Naive thymus-derived CD4-positive, alpha-beta T cell (primary cell): ENCODE measurements at regions of chr12 and their contacts with region 1.

Region 1: DNA sequence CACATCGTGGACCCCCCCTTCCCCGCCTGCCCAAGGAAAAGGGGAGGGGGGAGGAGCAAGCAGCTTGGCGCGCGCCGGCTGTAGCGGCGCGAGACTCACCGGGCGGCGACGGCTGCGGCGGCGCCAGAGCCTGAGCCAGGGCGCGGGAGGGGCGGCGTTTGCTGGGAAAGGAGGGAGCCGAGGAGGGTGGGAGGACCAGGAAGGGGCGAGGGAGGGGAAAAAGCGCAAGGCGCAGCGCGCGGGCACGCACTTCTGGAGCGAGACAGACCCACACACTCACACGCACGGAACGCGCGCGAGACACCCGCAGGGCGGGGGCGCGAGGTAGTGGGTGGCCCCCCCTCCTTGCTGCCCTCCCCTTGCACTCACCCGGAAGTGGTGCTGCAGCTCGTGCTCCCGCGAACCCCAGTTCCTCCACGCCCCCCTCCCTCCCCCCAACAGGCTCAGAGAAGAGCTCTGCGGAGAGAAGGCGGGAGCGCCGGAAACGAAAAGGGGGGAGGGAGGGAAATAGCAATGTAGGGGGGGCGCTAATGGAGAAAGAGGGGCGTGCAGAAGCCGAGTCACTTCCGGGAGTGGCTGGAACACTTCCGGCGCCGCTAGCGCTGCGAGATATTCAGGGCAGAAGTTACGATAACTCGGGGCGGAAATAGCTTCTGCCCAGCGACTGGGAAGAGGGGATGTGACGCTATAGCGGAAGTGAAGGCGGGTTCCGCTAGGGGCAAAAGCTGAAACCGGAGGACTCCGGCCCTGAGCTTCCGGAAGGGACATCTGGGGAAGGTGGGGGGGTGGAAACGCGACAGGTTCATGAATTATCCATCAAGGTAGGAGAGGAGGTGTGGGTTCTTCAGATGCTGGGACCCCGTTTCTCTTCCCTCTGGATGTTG is at the start of gene ZNF384:
- DNase-seq: peak; percentile 83 to 98 (median 96)
- ATAC-seq: peak; percentile 91
- H3K4me3 ChIP-seq: peak within 1 kb of the TSS; percentile 84
- H3K4me3 Mint-ChIP-seq: peak within 1 kb of the TSS; percentile 85 to 100 (median 96)
- H3K27ac ChIP-seq: peak within 1 kb of the TSS; percentile 91
- H3K27ac Mint-ChIP-seq: peak within 1 kb of the TSS; percentile 93 to 99 (median 98)
- H3K4me1 ChIP-seq: peaks cover 17 to 19% of the 10 kb centered on the region in 2 donors
- H3K4me1 Mint-ChIP-seq: peaks cover 37 to 69% (median 53%) of the 10 kb centered on the region in 7 donors
- H3K27me3 ChIP-seq: no peaks in the 10 kb centered on the region
- H3K27me3 Mint-ChIP-seq: no peaks in the 10 kb centered on the region
- total RNA-seq, gene ZNF384: 62.8 to 98.2 (median 85.4) TPM

Region 2: GRCh38 chr12:6470375-6471163 is 218.7 kb before region 1 on chr12 and contains the start of gene VAMP1:
- CTCF ChIA-PET with region 1: no interaction called
- POLR2A ChIA-PET with region 1: no interaction called
- intact Hi-C with region 1: loop called in 1 of 2 experiments (anchors 1 kb)
- DNase-seq: peak; percentile 90 to 97 (median 95)
- ATAC-seq: peak; percentile 94
- H3K4me3 ChIP-seq: peak within 1 kb of the TSS; percentile 96
- H3K4me3 Mint-ChIP-seq: peak within 1 kb of the TSS; percentile 85 to 96 (median 92)
- H3K27ac ChIP-seq: peak within 1 kb of the TSS; percentile 75
- H3K27ac Mint-ChIP-seq: peak within 1 kb of the TSS; percentile 79 to 99 (median 95)
- H3K4me1 ChIP-seq: peaks cover 38 to 39% of the 10 kb centered on the region in 2 donors
- H3K4me1 Mint-ChIP-seq: peaks cover 26 to 59% (median 52%) of the 10 kb centered on the region in 7 donors
- H3K27me3 ChIP-seq: no peaks in the 10 kb centered on the region
- H3K27me3 Mint-ChIP-seq: peaks cover 0 to 5% (median 0%) of the 10 kb centered on the region in 5 donors
- total RNA-seq, gene VAMP1: 38.7 to 123 (median 47.9) TPM

Region 3: GRCh38 chr12:6607751-6608591 is 81.3 kb before region 1 on chr12:
- CTCF ChIA-PET with region 1: interaction called, 5 read pairs
- POLR2A ChIA-PET with region 1: interaction called, 9 read pairs
- intact Hi-C with region 1: loop called (anchors 1 kb)
- DNase-seq: peak in 8 of 9 donors; percentile 56 to 81 (median 71)
- ATAC-seq: peak; percentile 49
- H3K4me3 ChIP-seq: no peak overlapping the region
- H3K4me3 Mint-ChIP-seq: no peak overlapping the region
- H3K27ac ChIP-seq: peak overlapping the region; percentile 96
- H3K27ac Mint-ChIP-seq: no peak overlapping the region
- H3K4me1 ChIP-seq: peaks cover 46 to 47% of the 10 kb centered on the region in 2 donors
- H3K4me1 Mint-ChIP-seq: peaks cover 48 to 55% (median 51%) of the 10 kb centered on the region in 7 donors
- H3K27me3 ChIP-seq: no peaks in the 10 kb centered on the region
- H3K27me3 Mint-ChIP-seq: no peaks in the 10 kb centered on the region

Region 4: GRCh38 chr12:6723607-6724396 is 34.6 kb after region 1 on chr12 and contains the start of gene COPS7A:
- CTCF ChIA-PET with region 1: interaction called, 11 read pairs
- POLR2A ChIA-PET with region 1: interaction called, 67 read pairs
- intact Hi-C with region 1: loop called (anchors 1 kb)
- DNase-seq: peak; percentile 77 to 94 (median 90)
- ATAC-seq: peak; percentile 93
- H3K4me3 ChIP-seq: peak within 1 kb of the TSS; percentile 63
- H3K4me3 Mint-ChIP-seq: peak within 1 kb of the TSS; percentile 80 to 97 (median 92)
- H3K27ac ChIP-seq: peak within 1 kb of the TSS; percentile 75
- H3K27ac Mint-ChIP-seq: peak within 1 kb of the TSS; percentile 90 to 98 (median 96)
- H3K4me1 ChIP-seq: peaks cover 10 to 11% of the 10 kb centered on the region in 2 donors
- H3K4me1 Mint-ChIP-seq: peaks cover 24 to 34% (median 27%) of the 10 kb centered on the region in 7 donors
- H3K27me3 ChIP-seq: no peaks in the 10 kb centered on the region
- H3K27me3 Mint-ChIP-seq: no peaks in the 10 kb centered on the region
- total RNA-seq, gene COPS7A: 21.9 to 38.7 (median 30.1) TPM

Region 5: DNA sequence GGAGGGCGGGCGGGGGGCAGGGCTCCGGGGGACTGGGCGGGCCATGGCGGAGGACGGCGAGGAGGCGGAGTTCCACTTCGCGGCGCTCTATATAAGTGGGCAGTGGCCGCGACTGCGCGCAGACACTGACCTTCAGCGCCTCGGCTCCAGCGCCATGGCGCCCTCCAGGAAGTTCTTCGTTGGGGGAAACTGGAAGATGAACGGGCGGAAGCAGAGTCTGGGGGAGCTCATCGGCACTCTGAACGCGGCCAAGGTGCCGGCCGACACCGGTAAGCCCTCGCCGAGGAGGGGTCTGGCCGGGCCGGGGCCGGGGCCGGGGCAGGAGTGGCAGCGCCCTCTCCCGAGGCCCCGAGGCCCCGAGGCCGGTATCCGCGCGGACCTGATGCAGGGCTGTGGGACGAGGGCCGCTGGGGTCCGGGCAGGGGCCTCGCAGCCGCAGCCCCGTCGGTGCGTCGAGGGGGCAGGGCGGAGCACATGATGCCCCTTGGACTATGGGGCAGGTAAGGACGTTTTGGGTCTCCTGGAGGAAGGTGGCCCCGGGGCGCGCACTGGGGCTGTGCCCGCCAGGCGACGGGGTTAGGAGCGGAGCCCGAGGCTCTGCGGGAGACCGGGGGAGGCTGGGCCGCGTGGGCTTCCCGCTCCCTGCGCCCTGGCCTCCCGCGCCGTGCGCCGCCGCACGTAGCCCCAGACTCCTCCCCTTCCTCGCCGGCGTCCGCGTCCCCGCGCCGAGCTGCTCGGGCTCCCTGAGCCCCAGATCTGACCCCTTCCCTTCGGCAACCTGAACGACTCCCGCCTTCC is 178.4 kb after region 1 on chr12 and contains the start of gene TPI1:
- CTCF ChIA-PET with region 1: no interaction called
- POLR2A ChIA-PET with region 1: interaction called, 12 read pairs
- intact Hi-C with region 1: loop called in 1 of 2 experiments (anchors 1 kb)
- DNase-seq: peak; percentile 40 to 87 (median 52)
- ATAC-seq: peak; percentile 88
- H3K4me3 ChIP-seq: peak within 1 kb of the TSS; percentile 61
- H3K4me3 Mint-ChIP-seq: peak within 1 kb of the TSS; percentile 87 to 93 (median 91)
- H3K27ac ChIP-seq: peak within 1 kb of the TSS; percentile 82
- H3K27ac Mint-ChIP-seq: peak within 1 kb of the TSS; percentile 76 to 95 (median 87)
- H3K4me1 ChIP-seq: peaks cover 38 to 39% of the 10 kb centered on the region in 2 donors
- H3K4me1 Mint-ChIP-seq: peaks cover 34 to 55% (median 44%) of the 10 kb centered on the region in 7 donors
- H3K27me3 ChIP-seq: no peaks in the 10 kb centered on the region
- H3K27me3 Mint-ChIP-seq: no peaks in the 10 kb centered on the region
- total RNA-seq, gene TPI1: 89.7 to 1,293 (median 134) TPM

Region 6: DNA sequence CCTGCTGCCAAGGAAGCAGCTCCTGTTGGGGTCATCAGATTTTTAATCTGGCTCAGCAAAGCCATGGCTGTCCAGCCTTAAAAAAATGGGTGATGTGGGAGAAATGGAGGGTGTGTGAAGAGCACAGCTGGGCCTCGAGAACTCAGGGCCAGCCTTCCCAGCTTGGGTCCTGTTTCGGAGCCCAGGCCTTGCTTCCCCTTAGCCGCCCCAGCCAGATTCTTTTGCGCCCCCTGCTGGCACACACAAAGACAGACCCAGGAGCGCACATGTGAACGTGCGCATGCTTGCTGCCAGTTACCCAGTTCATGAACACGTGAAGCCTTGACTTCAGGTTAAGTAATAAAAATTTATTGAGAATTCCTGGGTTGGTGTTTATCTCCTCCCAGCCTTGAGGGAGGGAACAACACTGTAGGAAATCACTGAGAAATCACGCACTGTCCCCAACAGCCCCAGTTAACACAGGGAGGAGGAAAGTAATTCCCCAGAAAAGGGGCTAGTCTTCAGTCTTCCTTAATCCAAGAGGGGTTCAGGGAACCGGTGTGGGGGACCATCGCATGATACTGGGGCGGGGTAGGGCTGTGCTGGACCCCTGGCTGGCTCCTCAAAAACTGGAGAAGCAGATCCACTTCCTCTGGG is 275.9 kb after region 1 on chr12:
- CTCF ChIA-PET with region 1: no interaction called
- POLR2A ChIA-PET with region 1: interaction called, 3 read pairs
- intact Hi-C with region 1: loop called in 1 of 2 experiments (anchors 1 kb)
- DNase-seq: peak; percentile 77 to 89 (median 85)
- ATAC-seq: peak; percentile 69
- H3K4me3 ChIP-seq: no peak overlapping the region
- H3K4me3 Mint-ChIP-seq: peak overlapping the region in 3 of 10 donors; percentile 9 to 23 (median 17)
- H3K27ac ChIP-seq: peak overlapping the region; percentile 68
- H3K27ac Mint-ChIP-seq: peak overlapping the region; percentile 75 to 95 (median 87)
- H3K4me1 ChIP-seq: peaks cover 45 to 60% of the 10 kb centered on the region in 2 donors
- H3K4me1 Mint-ChIP-seq: peaks cover 33 to 59% (median 56%) of the 10 kb centered on the region in 7 donors
- H3K27me3 ChIP-seq: no peaks in the 10 kb centered on the region
- H3K27me3 Mint-ChIP-seq: no peaks in the 10 kb centered on the region